PC-9 (cell line): ENCODE measurements at regions of chr2 and their contacts with region 1.

Region 1: GRCh38 chr2:225668606-225669266 is 269.2 kb downstream of the NYAP2 start:
- DNase-seq: peak; percentile 38 to 65
- H3K4me3 ChIP-seq: no peak overlapping the region
- H3K27ac ChIP-seq: no peak overlapping the region
- H3K4me1 ChIP-seq: no peaks in the 10 kb centered on the region
- H3K27me3 ChIP-seq: no peaks in the 10 kb centered on the region
- CTCF ChIP-seq: peak; percentile 97

Region 2: GRCh38 chr2:225632351-225632750 is 36.4 kb before region 1 on chr2:
- CTCF ChIA-PET with region 1: no interaction called
- POLR2A ChIA-PET with region 1: no interaction called
- intact Hi-C with region 1: no loop called
- DNase-seq: no peak
- H3K4me3 ChIP-seq: no peak overlapping the region
- H3K27ac ChIP-seq: no peak overlapping the region
- H3K4me1 ChIP-seq: no peaks in the 10 kb centered on the region
- H3K27me3 ChIP-seq: no peaks in the 10 kb centered on the region; the same call in 1 of the 2 replicates
- CTCF ChIP-seq: no peak

Region 3: DNA sequence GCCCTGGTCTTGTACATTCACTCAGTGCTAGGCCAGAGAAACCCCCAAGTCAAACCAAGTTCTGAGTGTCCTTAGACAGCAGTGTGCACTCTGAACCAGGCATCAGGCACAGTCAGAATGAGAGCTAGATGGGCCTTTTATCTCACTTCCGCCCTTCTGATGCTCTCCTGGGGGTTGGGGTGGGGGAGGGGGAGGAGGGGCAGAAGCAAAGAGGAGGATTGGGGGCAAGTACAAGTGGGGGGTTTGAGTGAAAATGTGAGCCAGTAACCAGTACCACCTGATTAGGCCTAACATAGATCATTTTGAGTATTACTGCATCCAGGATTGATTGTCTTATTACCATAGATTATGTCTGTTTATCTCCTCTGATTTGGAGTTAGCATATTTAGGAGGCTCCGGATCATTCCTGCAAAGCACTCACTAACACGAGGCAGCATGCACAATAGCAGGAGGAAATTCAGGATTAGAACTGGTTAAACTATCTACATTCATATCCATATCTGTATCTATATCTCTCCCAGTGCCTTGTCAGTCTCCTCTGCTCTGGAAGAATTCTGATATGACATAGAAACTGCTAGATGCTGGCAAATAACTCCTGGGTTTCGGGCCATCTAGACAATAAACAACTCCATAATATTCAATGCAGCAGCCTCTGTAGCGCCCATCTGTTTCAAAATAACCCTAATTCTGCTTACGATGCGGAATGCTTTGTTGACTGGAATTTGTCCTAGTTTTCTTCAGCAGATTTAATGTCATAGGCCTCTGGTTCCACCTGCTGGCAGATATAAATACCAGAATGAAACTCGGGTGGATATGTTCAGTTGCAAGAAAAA is 1316.2 kb after region 1 on chr2:
- CTCF ChIA-PET with region 1: interaction called, 6 read pairs
- POLR2A ChIA-PET with region 1: no interaction called
- intact Hi-C with region 1: loop called (anchors 1 kb)
- DNase-seq: peak; percentile 22 to 43
- H3K4me3 ChIP-seq: no peak overlapping the region
- H3K27ac ChIP-seq: no peak overlapping the region
- H3K4me1 ChIP-seq: no peaks in the 10 kb centered on the region
- H3K27me3 ChIP-seq: no peaks in the 10 kb centered on the region
- CTCF ChIP-seq: peak; percentile 72

Region 4: DNA sequence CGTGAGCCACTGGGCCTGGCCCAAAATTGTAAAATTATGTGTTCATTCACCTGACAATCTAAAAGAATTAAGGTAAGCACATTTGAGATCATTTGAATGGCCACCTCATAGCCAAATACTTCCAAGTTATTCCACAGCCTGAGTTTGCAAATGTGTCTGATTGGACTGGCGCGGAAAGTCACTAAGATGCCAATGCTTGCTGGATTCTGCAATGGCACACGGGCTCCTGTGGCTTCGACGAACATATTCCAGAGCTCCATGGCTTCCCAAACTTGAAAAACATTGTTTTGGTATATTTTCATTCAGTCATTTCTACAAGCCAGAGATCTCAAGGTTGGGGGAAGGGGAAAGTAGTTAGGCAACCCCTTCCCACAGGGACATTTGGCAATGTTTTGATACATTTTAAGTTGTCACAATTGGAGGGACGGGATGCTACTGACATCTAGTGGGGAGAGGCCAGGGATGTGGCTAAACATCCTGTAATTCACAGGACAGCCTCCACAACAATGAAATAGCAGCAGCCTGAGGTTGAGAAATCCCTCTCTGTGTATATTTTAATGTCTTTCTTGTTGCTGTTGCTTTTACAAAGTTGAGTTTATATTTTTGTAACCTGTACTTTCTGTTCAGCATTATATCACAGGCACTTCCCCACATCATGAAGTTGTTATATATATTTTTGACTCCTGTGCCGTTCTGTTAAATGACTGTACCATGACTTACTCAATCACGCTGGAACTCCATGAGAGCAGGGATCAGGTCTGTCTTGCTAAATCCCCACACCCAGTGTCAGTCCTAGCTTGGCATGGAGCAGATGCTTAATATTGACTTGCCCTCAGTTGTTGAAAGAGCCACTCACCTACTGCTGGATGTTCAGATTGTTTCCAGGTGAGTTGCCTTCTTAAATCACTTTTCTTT is 1438.4 kb after region 1 on chr2:
- CTCF ChIA-PET with region 1: interaction called, 3 read pairs
- POLR2A ChIA-PET with region 1: interaction called, 5 read pairs
- intact Hi-C with region 1: loop called (anchors 1 kb)
- DNase-seq: peak; percentile 37 to 50
- H3K4me3 ChIP-seq: no peak overlapping the region
- H3K27ac ChIP-seq: no peak overlapping the region
- H3K4me1 ChIP-seq: no peaks in the 10 kb centered on the region
- H3K27me3 ChIP-seq: no peaks in the 10 kb centered on the region
- CTCF ChIP-seq: peak; percentile 81